Panc1 (cell line): ENCODE measurements at regions of chr7 and their contacts with region 1.

Region 1: GRCh38 chr7:149635561-149636329 is 137.6 kb downstream of the ZNF467 start:
- DNase-seq: peak; percentile 46
- ATAC-seq: peak; percentile 84
- H3K4me3 ChIP-seq: no peak overlapping the region
- H3K27ac ChIP-seq: no peak overlapping the region
- H3K4me1 ChIP-seq: no peaks in the 10 kb centered on the region
- H3K27me3 ChIP-seq: peaks cover 4% of the 10 kb centered on the region; the same call in 1 of the 2 replicates
- CTCF ChIP-seq: no peak

Region 2: DNA sequence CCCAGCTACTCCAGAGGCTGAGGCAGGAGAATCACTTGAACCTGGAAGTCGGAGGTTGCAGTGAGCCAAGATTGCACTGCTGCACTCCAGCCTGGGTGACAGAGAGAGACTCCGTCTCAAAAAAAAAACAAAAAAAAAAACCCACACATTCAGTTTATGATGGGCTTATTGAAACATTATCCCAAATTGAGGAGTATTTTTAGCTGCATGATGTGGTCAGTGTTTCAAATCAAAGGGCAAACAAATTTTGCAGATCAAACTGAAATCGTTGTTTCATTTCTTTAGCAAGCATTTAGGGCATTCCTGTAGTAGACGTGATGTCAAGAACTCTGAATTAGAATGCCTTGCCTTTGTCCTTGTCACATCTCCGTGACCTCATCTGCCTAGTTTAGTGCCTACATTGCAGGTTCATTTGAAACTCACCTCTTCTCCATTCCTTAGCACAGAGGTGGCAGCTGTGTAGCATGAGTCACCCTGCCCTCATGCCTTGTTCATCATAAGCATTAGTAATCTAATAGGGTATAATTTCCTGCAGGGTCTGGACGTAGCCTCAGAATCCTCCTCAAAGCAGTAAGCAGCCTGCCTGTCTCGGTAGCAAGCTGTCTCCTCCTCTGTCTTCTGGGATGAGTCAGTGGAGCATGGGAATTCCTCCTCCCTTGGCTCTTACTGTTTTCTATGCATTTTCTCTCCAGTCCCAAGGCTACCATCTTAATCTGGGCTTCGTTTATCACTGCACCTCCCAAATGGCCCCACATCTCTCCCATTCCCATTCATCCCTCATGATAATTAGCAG is 863.3 kb before region 1 on chr7:
- CTCF ChIA-PET with region 1: no interaction called
- POLR2A ChIA-PET with region 1: no interaction called
- in situ Hi-C with region 1: no loop called
- intact Hi-C with region 1: no loop called
- DNase-seq: peak; percentile 96
- ATAC-seq: peak; percentile 91
- H3K4me3 ChIP-seq: no peak overlapping the region
- H3K27ac ChIP-seq: no peak overlapping the region
- H3K4me1 ChIP-seq: no peaks in the 10 kb centered on the region
- H3K27me3 ChIP-seq: no peaks in the 10 kb centered on the region
- CTCF ChIP-seq: no peak

Region 3: DNA sequence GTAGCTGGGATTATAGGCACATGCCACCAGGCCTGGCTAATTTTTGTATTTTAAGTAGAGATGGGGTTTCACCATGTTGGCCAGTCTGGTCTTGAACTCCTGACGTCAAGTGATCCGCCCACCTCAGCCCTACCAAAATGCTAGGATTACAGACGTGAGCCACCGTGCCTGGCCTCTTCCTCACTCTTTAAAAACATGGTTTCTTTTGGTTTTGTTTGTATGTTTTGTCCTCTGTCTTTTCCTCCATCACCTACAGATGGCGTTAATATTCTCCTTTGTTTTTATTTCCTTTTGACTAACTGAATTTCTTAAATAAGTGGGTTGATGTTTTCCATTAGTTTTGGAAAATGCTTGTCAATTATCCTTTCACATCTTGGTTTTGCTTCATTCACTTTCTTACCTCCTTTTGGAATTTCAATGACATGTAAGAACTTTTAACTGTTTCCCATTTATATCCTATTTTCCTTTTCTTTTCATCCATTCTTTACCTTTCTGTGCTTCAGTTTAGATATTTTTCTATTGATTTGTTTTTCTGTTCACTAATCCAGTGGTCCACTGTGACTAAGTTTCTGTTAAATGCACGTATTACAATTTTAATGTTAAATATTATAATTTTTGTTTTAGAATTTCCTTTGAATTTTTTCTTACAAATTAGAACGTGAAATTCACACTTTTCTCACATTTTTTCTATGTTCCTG is 33.5 kb after region 1 on chr7:
- CTCF ChIA-PET with region 1: interaction called, 19 read pairs
- POLR2A ChIA-PET with region 1: no interaction called
- in situ Hi-C with region 1: no loop called
- intact Hi-C with region 1: no loop called
- DNase-seq: peak; percentile 27
- ATAC-seq: no peak
- H3K4me3 ChIP-seq: no peak overlapping the region
- H3K27ac ChIP-seq: no peak overlapping the region
- H3K4me1 ChIP-seq: no peaks in the 10 kb centered on the region; the same call in 1 of the 2 replicates
- H3K27me3 ChIP-seq: 0 out of 2 replicates have a peak, but pooled peaks cover 4% of the 10 kb centered on the region
- CTCF ChIP-seq: peak; percentile 69

Region 4: GRCh38 chr7:150341256-150342120 is 705.7 kb after region 1 on chr7 and contains the start of gene RARRES2:
- CTCF ChIA-PET with region 1: no interaction called
- POLR2A ChIA-PET with region 1: no interaction called
- in situ Hi-C with region 1: no loop called
- intact Hi-C with region 1: no loop called
- DNase-seq: no peak
- ATAC-seq: no peak
- H3K4me3 ChIP-seq: no peak within 1 kb of the TSS
- H3K27ac ChIP-seq: no peak within 1 kb of the TSS
- H3K4me1 ChIP-seq: peaks cover 3% of the 10 kb centered on the region; the same call in 1 of the 2 replicates
- H3K27me3 ChIP-seq: no peaks in the 10 kb centered on the region
- CTCF ChIP-seq: no peak
- total RNA-seq, gene RARRES2: 1.1 TPM

Region 5: GRCh38 chr7:150766334-150766709 is 1130.6 kb after region 1 on chr7:
- CTCF ChIA-PET with region 1: no interaction called
- POLR2A ChIA-PET with region 1: no interaction called
- in situ Hi-C with region 1: no loop called
- intact Hi-C with region 1: no loop called
- DNase-seq: no peak
- ATAC-seq: no peak
- H3K4me3 ChIP-seq: no peak overlapping the region
- H3K27ac ChIP-seq: no peak overlapping the region
- H3K4me1 ChIP-seq: no peaks in the 10 kb centered on the region
- H3K27me3 ChIP-seq: no peaks in the 10 kb centered on the region; the same call in 1 of the 2 replicates
- CTCF ChIP-seq: no peak